ENCODE measurements at regions of chr5 and their contacts with region 1.

Region 1: GRCh38 chr5:90461292-90461691 is 13.3 kb downstream of the MBLAC2 start:
- DNase-seq: no peak
- H3K4me3 Mint-ChIP-seq: no peak overlapping the region
- H3K27ac Mint-ChIP-seq: no peak overlapping the region
- H3K4me1 Mint-ChIP-seq: no peaks in the 10 kb centered on the region
- H3K27me3 Mint-ChIP-seq: no peaks in the 10 kb centered on the region
- CTCF ChIP-seq: no peak

Region 2: DNA sequence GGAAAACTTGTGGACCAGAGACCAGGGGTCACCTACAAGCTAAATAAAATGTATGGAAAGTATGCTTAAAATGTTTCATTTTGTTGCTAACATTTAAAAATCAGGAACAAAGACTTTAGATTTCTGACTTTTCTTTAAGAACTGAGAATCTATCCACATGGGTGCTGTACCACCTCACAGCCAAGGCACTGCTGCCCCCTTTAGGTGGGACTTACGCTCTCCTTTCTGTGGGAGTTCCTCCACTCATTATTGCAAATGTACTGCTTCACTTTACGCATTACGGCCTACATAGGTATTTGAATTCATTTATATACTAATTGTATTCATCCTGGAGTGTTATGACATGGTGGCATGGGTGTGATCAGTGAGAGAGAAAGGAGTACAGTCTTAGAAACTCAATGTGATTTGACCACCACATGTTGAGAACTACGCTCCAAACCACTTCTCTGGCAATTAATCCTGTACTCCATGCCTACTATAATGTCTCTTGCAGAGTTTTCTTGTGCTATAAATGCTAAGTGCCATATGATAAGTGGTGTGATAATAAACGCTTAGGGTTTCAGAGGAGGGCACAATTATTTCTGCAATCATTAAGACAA is 27.1 kb before region 1 on chr5:
- CTCF ChIA-PET with region 1: no interaction called
- intact Hi-C with region 1: loop called (anchors 1 kb)
- DNase-seq: peak; percentile 76
- H3K4me3 Mint-ChIP-seq: no peak overlapping the region
- H3K27ac Mint-ChIP-seq: no peak overlapping the region
- H3K4me1 Mint-ChIP-seq: peaks cover 12% of the 10 kb centered on the region
- H3K27me3 Mint-ChIP-seq: peaks cover 25% of the 10 kb centered on the region
- CTCF ChIP-seq: peak; percentile 71

Measured in Calu3 (cell line).